Common myeloid progenitor, CD34-positive (primary cell): ENCODE measurements at regions of chr5 and their contacts with region 1.

Region 1: DNA sequence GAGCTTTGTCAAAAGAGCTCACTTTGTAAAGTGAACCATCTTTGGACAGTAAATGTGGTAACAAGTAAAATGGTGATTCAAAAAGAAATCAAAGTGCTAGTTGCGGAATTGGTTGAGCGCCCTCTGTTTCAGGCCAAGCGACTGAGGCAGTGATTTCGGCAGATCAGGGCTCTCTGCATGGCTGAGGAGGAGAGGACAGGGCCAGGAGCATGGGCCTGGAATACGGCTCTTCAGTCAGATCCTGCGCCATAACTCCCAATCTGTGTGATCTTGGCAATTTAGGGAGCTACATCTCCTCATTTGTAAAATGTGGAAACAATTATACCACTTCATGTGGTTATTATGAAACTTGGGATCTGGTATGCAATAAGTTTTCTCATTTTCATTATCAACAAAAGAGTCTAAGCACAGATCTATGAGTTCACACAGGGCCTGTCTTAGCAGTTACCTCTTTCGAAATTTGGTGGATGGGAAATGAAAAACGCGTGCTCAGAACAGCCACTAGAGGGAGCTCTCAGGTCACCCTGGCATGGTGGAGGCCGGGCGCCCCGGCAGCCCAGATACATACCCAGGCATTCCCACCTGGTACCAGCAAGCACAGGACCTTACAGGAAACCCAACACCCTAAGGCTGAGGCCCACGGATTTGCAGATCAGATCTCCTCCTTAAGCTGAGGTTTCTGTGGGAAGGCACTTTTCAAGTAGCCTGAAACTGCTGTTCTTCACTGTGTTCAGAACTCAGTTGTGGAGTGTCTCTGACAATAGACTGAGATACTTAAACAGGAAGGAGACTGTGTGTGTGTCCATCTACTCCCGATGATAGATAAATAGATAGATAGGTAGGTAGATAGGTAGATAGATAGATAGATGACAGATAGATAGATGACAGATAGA is 303.7 kb downstream of the RAB3C start:
- DNase-seq: peak; percentile 54 to 72 (median 69)
- H3K4me3 ChIP-seq: no peak overlapping the region
- H3K27ac ChIP-seq: no peak overlapping the region
- H3K4me1 ChIP-seq: peaks cover 0 to 4% (median 3%) of the 10 kb centered on the region in 4 experiments
- H3K27me3 ChIP-seq: no peaks in the 10 kb centered on the region

Region 2: DNA sequence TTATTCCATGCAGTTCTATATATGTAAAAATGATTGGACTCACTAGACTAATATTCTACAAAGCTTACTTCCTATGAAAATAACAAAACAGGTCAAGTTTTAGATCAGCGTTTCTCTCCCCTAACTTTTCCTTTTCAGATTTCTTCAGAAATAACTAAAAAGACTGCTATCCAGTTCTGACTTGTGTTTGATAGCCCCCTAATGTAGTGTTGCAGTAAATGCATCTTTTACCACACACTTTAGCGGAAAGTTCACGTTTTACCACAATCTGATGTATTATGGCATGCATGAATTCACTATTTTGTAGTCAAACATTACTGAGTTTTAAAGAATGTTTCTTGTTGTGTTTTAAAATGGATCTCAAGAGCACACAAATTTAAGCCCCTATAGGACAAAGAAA is 11.0 kb before region 1 on chr5:
- CTCF ChIA-PET with region 1: interaction called, 21 read pairs
- POLR2A ChIA-PET with region 1: no interaction called
- DNase-seq: peak in 2 of 3 donors; percentile 31 to 37
- H3K4me3 ChIP-seq: no peak overlapping the region
- H3K27ac ChIP-seq: no peak overlapping the region
- H3K4me1 ChIP-seq: peaks cover 0 to 5% (median 0%) of the 10 kb centered on the region in 4 experiments
- H3K27me3 ChIP-seq: no peaks in the 10 kb centered on the region

Region 3: DNA sequence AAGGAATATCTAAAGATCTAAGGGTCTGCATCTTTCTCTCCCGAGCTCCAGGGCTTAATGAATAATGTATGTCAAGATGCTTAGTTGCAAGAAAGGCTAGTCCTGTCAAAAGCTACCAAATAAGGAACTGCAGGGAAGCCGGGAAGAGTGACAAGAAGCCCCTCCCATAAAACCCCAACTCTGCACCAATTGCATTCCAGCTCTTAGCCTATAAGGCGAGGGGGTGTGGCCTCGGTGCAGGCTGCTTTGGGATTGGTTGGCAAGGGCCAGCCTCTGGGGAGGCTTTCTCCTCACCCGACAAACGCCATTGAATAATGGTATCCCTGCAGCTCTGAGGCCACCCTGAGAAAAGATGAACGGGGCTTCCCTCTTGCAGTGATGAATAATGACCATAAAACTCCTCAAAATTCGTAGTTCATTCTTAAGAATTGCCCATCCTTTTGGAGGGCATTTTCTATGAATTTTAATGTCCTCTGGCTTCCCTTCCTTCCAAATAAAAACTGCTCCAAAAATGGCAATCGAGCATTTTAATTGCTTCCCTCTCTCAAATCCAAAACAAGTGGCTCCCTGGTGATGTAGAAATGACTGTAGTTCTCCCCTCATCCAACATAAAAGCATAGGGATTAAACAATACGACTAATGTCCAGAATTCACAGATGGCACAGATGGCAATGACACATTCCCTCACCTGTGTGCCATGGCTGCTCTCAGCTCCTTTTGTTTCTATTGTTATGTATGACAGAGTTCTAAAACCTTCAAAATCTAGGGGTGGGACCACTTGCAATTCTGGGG is 113.4 kb after region 1 on chr5:
- CTCF ChIA-PET with region 1: interaction called, 10 read pairs
- POLR2A ChIA-PET with region 1: no interaction called
- DNase-seq: no peak
- H3K4me3 ChIP-seq: no peak overlapping the region
- H3K27ac ChIP-seq: no peak overlapping the region
- H3K4me1 ChIP-seq: no peaks in the 10 kb centered on the region
- H3K27me3 ChIP-seq: no peaks in the 10 kb centered on the region

Region 4: DNA sequence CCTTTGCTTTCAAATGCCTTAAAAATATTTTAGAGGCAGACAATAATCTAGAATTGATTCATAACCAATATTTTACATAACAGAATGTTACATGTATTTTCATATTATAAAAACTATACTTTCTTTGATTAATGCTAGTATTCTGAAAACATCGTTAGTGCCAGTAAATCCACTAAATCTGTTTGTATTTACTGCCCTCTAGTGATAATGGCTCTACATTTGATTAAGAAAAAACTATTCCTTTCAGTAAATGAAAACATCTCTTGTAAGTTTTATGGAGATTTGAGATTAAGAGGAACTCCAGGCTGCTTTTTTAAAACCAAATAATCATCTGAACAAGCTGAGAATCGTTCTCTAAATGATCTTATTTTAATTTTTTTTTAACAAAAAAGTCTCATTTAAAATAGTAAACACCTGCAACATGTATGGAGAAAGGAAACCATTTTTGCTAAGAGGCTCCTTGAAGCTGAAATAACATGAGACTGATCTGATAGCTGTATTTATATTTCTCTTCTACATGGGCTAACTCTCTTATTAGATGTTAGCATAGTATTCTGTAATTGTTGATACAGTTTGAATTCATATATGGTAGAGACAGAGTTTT is 121.0 kb after region 1 on chr5:
- CTCF ChIA-PET with region 1: interaction called, 49 read pairs
- POLR2A ChIA-PET with region 1: no interaction called
- DNase-seq: peak; percentile 43 to 67 (median 61)
- H3K4me3 ChIP-seq: no peak overlapping the region
- H3K27ac ChIP-seq: no peak overlapping the region
- H3K4me1 ChIP-seq: peaks cover 0 to 15% (median 7%) of the 10 kb centered on the region in 4 experiments
- H3K27me3 ChIP-seq: no peaks in the 10 kb centered on the region

Region 5: DNA sequence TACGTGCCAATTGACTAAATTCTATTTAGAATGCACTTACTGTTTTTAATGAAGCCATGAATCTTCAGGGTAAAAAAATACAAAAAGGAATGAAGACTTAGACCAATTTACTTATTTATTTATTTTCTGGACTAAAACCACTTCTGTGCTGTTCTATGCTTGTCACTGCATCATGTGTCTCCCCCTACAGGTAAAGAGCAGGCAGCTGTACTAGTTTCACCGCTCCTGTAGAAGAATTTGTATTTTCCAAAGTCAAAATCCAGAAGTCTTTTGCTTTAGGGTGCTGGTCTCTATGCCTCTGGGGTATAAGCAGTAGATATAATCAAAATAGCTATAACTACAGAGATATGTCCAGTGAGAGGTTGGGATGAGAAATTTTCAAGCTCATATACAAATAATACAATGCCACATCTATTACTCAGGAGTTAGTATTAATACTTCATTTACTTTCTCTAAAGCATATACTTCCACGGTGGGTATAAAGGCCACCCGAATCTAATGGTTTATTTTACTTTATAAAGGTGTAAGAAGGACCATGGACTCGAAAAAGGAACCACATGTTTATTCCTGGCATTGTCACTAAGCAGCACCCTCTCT is 287.8 kb after region 1 on chr5:
- CTCF ChIA-PET with region 1: interaction called, 40 read pairs
- POLR2A ChIA-PET with region 1: no interaction called
- DNase-seq: peak; percentile 68 to 79 (median 77)
- H3K4me3 ChIP-seq: no peak overlapping the region
- H3K27ac ChIP-seq: no peak overlapping the region
- H3K4me1 ChIP-seq: peaks cover 0 to 16% (median 6%) of the 10 kb centered on the region in 4 experiments
- H3K27me3 ChIP-seq: no peaks in the 10 kb centered on the region